OCI-LY7 (cell line): ENCODE measurements at regions of chr3 and their contacts with region 1.

Region 1: DNA sequence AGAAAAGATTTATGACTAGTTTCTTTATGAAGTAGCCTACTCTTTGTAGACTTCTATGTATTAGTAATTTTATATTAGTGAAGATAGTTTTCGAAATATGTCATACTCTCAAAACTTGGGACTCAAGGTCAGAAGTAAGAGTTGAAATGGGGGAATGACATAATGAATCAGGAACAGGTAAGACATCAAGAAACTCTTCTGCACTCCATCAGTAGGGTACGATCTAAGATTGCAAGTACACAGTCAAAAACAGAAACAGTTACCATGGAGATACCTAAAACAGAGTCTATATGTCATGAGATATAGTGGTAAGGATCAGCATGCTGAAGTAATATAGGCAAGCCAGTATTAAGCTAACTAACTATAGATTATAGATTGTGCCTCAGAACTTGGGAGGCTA is 187.0 kb upstream of the MLF1 start:
- DNase-seq: no peak
- H3K4me3 ChIP-seq: no peak overlapping the region
- H3K27ac ChIP-seq: no peak overlapping the region
- H3K4me1 ChIP-seq: no peaks in the 10 kb centered on the region
- CTCF ChIP-seq: no peak

Region 2: DNA sequence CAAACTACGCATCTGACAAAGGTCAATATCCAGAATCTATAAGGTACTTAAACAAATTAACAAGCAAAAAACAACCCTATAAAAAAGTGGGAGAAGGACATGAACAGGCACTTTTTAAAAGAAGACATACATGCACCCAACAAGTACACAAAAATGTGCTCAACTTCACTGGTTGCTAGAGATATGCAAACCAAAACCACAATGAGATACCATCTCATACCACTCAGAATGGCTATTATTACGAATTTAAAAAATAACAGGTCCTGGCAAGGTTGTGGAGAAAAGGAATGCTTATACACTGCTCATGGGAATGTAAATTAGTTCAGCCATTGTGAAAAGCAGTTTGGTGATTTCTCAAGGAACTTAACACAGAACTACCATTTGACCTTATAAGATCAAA is 11.4 kb after region 1 on chr3:
- CTCF ChIA-PET with region 1: no interaction called
- POLR2A ChIA-PET with region 1: interaction called, 12 read pairs
- intact Hi-C with region 1: no loop called
- DNase-seq: no peak
- H3K4me3 ChIP-seq: no peak overlapping the region
- H3K27ac ChIP-seq: no peak overlapping the region
- H3K4me1 ChIP-seq: no peaks in the 10 kb centered on the region
- CTCF ChIP-seq: no peak